Activated B cell treated with CpG ODN at 0.5 μM for 24 hours (primary cell): ENCODE measurements at regions of chr11 and their contacts with region 1.

Region 1: DNA sequence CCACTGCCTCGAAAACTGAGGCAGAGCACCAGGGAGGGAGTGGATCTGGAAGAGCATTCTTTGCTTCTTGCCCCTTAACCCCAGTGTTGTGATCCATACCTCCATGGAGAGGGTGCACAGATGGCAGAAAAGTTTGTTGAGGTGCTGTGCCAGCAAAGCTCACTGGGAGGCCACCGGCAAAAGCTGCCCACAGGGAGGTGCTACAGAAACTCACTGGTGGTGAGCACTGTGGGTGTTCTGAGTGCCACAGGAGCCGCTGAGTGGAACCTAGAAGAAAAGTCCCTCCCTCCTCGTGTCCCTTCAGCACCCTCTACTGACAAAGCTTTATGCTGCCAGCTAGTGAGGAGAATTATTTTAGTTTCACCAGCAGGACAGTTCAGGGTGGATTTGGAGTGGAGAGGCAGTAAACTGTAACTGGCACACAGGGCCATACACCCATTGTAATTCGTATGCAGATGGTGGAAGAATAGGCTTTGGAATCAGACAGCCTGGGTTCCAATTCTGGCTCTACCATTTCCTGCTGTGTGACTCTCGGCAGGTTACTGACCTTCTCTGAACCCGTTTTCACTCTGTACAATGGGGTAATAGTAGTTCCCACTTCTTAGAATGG is 84.6 kb downstream of the SWAP70 start:
- DNase-seq: peak; percentile 46
- ATAC-seq: peak; percentile 83
- H3K4me3 Mint-ChIP-seq: peak overlapping the region; percentile 53
- H3K27ac Mint-ChIP-seq: peak overlapping the region; percentile 77
- H3K4me1 Mint-ChIP-seq: peaks cover 65% of the 10 kb centered on the region
- H3K27me3 Mint-ChIP-seq: no peaks in the 10 kb centered on the region
- CTCF ChIP-seq: peak; percentile 76

Region 2: GRCh38 chr11:9250139-9250582 is 498.3 kb before region 1 on chr11:
- CTCF ChIA-PET with region 1: no interaction called
- POLR2A ChIA-PET with region 1: no interaction called
- intact Hi-C with region 1: no loop called
- DNase-seq: no peak
- ATAC-seq: no peak
- H3K4me3 Mint-ChIP-seq: peak overlapping the region; percentile 1
- H3K27ac Mint-ChIP-seq: no peak overlapping the region
- H3K4me1 Mint-ChIP-seq: peaks cover 41% of the 10 kb centered on the region
- H3K27me3 Mint-ChIP-seq: no peaks in the 10 kb centered on the region
- CTCF ChIP-seq: no peak

Region 3: GRCh38 chr11:9534791-9535781 is 213.4 kb before region 1 on chr11:
- CTCF ChIA-PET with region 1: interaction called, 68 read pairs
- POLR2A ChIA-PET with region 1: interaction called, 11 read pairs
- intact Hi-C with region 1: loop called (anchors 1 kb)
- DNase-seq: peak; percentile 71
- ATAC-seq: peak; percentile 71
- H3K4me3 Mint-ChIP-seq: no peak overlapping the region
- H3K27ac Mint-ChIP-seq: no peak overlapping the region
- H3K4me1 Mint-ChIP-seq: peaks cover 5% of the 10 kb centered on the region
- H3K27me3 Mint-ChIP-seq: no peaks in the 10 kb centered on the region
- CTCF ChIP-seq: no peak

Region 4: DNA sequence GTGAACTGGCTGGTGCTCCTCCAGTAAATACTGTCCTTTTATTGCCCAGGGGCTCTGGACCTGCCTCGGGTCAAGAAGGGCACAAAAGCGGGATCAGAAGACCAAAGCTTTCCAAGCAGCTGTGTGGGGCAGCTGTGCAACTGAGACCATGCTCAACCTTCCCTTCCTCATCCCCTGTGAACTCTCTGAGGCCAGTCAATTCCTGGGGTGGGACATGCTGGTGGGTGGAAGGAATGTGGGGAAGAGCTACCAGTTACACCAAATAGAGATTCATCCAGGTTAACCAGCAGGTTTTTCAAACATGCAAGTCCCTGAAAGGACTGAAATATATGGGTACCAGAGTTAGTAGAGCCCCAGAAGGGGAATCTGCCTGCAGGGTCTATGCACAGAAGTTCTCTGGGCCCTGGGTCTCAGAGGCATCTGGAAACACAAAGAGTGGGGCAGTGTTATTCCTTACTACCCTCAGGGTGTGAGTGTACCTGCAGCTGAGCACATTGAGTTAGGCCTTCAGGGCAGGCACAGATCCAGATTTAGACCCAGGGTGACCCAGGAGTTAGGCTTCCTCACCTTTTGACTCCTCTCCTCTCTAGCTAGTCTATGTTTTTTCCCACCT is 128.6 kb before region 1 on chr11:
- CTCF ChIA-PET with region 1: interaction called, 9 read pairs
- POLR2A ChIA-PET with region 1: interaction called, 10 read pairs
- intact Hi-C with region 1: no loop called
- DNase-seq: no peak
- ATAC-seq: no peak
- H3K4me3 Mint-ChIP-seq: peak overlapping the region; percentile 73
- H3K27ac Mint-ChIP-seq: peak overlapping the region; percentile 88
- H3K4me1 Mint-ChIP-seq: peaks cover 73% of the 10 kb centered on the region
- H3K27me3 Mint-ChIP-seq: no peaks in the 10 kb centered on the region
- CTCF ChIP-seq: no peak

Region 5: DNA sequence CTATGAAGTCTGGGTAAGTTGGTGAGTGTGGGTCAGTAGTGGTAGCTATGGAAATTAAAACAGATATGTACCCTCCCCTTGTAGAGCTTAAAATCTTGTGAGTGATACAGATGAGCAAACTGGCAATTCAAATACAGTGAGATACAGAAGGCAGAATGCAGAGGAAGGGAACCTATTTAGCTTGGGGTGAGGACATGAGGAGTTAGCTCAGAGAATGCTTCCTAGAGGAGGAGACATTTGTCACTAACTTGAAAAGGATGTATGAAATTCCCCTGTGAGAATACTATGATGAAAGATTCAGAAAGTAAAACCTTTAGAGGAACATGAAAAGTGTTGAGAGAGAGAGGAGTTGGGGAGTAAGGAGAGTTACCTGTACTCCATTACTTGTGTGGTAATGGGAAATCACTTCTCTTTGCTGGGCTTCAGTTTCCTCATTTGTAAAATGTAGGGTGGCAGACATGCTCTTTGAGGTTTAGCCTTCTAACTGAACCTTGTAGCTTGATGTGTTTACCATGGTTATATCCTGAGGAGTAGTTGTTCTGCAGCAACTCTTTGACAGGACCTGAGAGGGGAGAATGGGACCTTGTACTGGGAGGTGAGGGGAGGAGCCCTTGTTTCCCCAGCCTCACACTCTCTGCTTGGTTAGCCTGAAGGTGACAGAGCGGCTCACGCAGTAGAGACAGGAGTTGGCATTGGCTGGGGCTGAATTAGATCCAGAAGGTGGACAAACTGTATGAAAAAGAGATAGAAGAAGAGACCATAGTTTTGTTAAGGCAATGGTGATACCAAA is 66.7 kb before region 1 on chr11:
- CTCF ChIA-PET with region 1: interaction called, 3 read pairs
- POLR2A ChIA-PET with region 1: interaction called, 16 read pairs
- intact Hi-C with region 1: no loop called
- DNase-seq: no peak
- ATAC-seq: peak; percentile 64
- H3K4me3 Mint-ChIP-seq: no peak overlapping the region
- H3K27ac Mint-ChIP-seq: no peak overlapping the region
- H3K4me1 Mint-ChIP-seq: peaks cover 60% of the 10 kb centered on the region
- H3K27me3 Mint-ChIP-seq: no peaks in the 10 kb centered on the region
- CTCF ChIP-seq: no peak

Region 6: GRCh38 chr11:9716275-9717039 is 32.0 kb before region 1 on chr11:
- CTCF ChIA-PET with region 1: interaction called, 20 read pairs
- POLR2A ChIA-PET with region 1: interaction called, 12 read pairs
- intact Hi-C with region 1: loop called (anchors 1 kb)
- DNase-seq: no peak
- ATAC-seq: peak; percentile 72
- H3K4me3 Mint-ChIP-seq: peak overlapping the region; percentile 71
- H3K27ac Mint-ChIP-seq: peak overlapping the region; percentile 87
- H3K4me1 Mint-ChIP-seq: peaks cover 92% of the 10 kb centered on the region
- H3K27me3 Mint-ChIP-seq: no peaks in the 10 kb centered on the region
- CTCF ChIP-seq: no peak

Region 7: DNA sequence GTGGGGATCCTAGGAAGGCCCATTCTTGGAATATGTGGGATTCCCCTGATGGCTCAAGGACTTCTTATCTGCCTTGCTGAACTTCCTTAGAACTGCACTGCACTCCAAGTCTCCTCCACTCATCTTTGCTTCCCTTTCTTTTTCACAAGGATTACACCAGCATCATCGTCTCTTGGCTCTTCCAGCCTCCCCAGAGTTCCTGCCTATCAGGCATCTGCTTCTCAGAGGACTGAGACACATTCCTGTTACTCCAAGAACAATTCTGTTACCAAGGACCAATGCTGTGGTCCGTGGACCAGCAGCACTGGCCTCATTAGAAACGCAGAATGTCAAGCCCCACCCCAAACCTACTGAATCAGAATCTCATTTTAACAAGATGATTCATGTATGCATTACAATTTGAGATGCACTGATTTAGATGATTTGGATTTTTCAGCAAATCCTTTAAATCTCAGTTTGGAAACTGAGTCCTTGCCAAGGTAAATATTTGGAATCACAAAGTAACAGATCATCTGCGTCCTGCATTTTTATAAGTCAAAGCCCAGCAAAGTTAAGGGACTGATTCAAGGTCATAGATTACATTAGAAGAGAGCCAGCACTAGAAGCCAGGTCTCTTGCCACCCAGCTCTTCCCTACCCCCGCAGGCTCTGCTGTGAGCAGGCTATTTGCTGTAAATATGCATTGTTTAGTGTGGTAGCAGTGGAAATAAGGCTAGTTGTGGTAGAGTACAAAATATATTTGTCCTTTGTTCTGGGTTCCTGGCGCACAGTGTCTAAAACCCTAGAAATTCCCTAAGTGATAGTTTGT is 26.3 kb after region 1 on chr11:
- CTCF ChIA-PET with region 1: no interaction called
- POLR2A ChIA-PET with region 1: no interaction called
- intact Hi-C with region 1: no loop called
- DNase-seq: no peak
- ATAC-seq: no peak
- H3K4me3 Mint-ChIP-seq: no peak overlapping the region
- H3K27ac Mint-ChIP-seq: no peak overlapping the region
- H3K4me1 Mint-ChIP-seq: peaks cover 3% of the 10 kb centered on the region
- H3K27me3 Mint-ChIP-seq: no peaks in the 10 kb centered on the region
- CTCF ChIP-seq: no peak